Panc1 (cell line): ENCODE measurements at regions of chr1 and their contacts with region 1.

Region 1: DNA sequence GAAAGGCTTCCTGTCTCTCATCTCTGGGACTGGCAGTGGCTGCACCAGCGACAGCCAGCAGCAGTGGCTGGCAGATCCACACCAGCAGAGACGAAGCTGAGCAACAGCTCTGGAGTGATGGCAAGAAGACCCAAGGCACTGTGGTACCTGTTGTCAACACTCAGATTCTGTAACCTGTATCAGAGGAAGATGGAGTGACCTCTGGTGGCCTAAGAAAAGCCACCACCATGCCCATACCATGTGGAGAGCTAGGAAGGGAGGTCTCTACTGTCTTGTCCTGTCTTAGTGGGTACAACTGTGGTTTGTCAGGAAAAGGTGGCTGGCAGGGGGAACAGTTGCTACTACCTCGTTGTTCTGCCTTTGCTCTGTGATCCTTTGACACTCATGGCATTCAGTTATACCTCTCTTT is 22.5 kb upstream of the RHBDL2 start:
- DNase-seq: no peak
- ATAC-seq: peak; percentile 91
- H3K4me3 ChIP-seq: no peak overlapping the region
- H3K27ac ChIP-seq: no peak overlapping the region
- H3K4me1 ChIP-seq: no peaks in the 10 kb centered on the region
- H3K27me3 ChIP-seq: no peaks in the 10 kb centered on the region
- CTCF ChIP-seq: no peak; the same call in 1 of the 2 replicates

Region 2: GRCh38 chr1:38848071-38848470 is 116.1 kb before region 1 on chr1:
- CTCF ChIA-PET with region 1: no interaction called
- POLR2A ChIA-PET with region 1: no interaction called
- in situ Hi-C with region 1: no loop called
- intact Hi-C with region 1: no loop called
- DNase-seq: no peak
- ATAC-seq: no peak
- H3K4me3 ChIP-seq: no peak overlapping the region
- H3K27ac ChIP-seq: no peak overlapping the region
- H3K4me1 ChIP-seq: no peaks in the 10 kb centered on the region
- H3K27me3 ChIP-seq: no peaks in the 10 kb centered on the region
- CTCF ChIP-seq: no peak

Region 3: GRCh38 chr1:38873027-38873969 is 90.8 kb before region 1 on chr1 and contains the start of gene MYCBP:
- CTCF ChIA-PET with region 1: no interaction called
- POLR2A ChIA-PET with region 1: no interaction called
- in situ Hi-C with region 1: no loop called
- intact Hi-C with region 1: loop called (anchors 10 kb)
- DNase-seq: peak; percentile 85
- ATAC-seq: peak; percentile 100
- H3K4me3 ChIP-seq: peak within 1 kb of the TSS; percentile 86 to 96
- H3K27ac ChIP-seq: peak within 1 kb of the TSS; percentile 94
- H3K4me1 ChIP-seq: peaks cover 18% of the 10 kb centered on the region
- H3K27me3 ChIP-seq: no peaks in the 10 kb centered on the region
- CTCF ChIP-seq: no peak
- total RNA-seq, gene MYCBP: 17.4 TPM